ENCODE measurements at regions of chr6 and their contacts with region 1.

Region 1: GRCh38 chr6:134537146-134537555 is 219.2 kb upstream of the SGK1 start:
- DNase-seq: peak; percentile 70
- H3K4me3 ChIP-seq: no peak overlapping the region
- H3K27ac ChIP-seq: peak overlapping the region; percentile 79
- H3K27me3 ChIP-seq: no peaks in the 10 kb centered on the region
- CTCF ChIP-seq: no peak

Region 2: DNA sequence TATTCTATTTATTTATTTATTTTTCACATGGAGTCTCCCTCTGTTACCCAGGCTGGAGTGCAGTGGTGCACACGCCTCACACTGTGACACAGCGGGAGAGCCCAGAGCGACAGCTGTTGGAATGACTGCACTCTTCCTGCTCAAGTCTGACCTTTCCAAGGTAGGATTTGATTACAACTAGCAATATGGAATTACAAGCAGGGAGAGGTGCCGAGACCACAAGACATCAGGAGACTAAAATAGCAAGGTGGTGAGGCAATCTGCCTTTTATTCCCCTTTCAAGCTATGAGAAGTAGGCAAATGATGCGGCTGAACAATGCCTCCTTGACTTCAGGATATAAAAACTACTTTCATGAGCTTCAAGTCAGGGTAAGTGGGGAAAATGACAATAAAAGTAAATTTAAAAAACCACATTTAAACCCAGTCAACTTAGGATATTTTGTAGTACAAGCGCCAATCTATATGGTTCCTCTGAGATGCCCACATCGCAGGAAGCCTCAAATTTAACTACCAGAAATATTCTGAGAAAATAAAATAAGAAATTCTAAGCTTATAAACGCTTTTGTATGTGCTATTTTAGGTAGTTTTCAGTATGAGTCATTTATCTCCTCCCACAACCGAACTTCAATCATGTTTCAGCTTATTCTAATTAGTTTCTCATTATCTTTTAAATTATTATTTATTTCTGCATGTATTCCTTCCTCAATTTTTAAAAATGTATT is 72.3 kb before region 1 on chr6:
- CTCF ChIA-PET with region 1: no interaction called
- POLR2A ChIA-PET with region 1: no interaction called
- DNase-seq: peak; percentile 60
- H3K4me3 ChIP-seq: no peak overlapping the region
- H3K27ac ChIP-seq: peak overlapping the region; percentile 32
- H3K27me3 ChIP-seq: no peaks in the 10 kb centered on the region
- CTCF ChIP-seq: no peak

Region 3: GRCh38 chr6:134512981-134513391 is 24.2 kb before region 1 on chr6:
- CTCF ChIA-PET with region 1: no interaction called
- POLR2A ChIA-PET with region 1: no interaction called
- DNase-seq: no peak
- H3K4me3 ChIP-seq: no peak overlapping the region
- H3K27ac ChIP-seq: no peak overlapping the region
- H3K27me3 ChIP-seq: no peaks in the 10 kb centered on the region
- CTCF ChIP-seq: no peak

Region 4: DNA sequence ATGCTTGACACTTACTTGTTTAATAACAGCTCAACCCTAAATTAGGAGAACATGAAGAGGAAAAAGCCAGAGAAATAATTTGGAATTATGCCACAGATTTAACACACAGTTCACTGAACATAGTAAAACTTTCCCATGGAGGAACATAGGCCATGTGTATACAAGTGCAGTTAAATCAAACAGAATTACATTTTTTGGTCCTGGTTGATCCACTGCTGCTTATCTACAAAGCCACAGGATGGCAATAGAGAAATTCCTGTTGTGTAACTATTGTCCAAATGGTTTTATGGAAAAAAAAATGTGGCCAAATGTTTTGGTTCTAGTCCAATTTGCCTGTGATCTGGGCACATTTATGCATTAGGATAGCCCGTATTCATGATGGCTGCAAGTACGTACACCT is 276.0 kb after region 1 on chr6:
- CTCF ChIA-PET with region 1: interaction called, 10 read pairs
- POLR2A ChIA-PET with region 1: no interaction called
- DNase-seq: no peak
- H3K4me3 ChIP-seq: no peak overlapping the region
- H3K27ac ChIP-seq: no peak overlapping the region
- H3K27me3 ChIP-seq: no peaks in the 10 kb centered on the region
- CTCF ChIP-seq: no peak

Region 5: DNA sequence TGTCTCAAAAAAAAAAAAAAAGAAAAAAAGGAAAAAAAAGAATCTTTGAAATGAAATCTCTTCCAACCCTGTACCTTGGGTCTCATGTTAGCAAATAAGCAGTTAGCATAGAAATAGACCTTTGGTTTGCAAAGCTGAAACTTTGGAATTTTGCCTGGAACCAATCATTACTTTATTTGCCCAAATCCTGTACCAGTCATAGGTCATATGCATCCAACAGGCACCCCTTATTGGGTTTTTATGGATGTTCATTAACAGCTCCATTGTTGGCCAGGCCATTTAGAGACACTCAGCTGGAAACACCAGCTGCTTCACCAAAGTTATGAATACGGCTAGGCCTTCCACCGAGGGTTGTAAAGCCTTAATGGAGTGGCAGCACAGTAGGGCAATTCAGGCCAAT is 359.7 kb after region 1 on chr6:
- CTCF ChIA-PET with region 1: no interaction called
- POLR2A ChIA-PET with region 1: no interaction called
- DNase-seq: no peak
- H3K4me3 ChIP-seq: no peak overlapping the region
- H3K27ac ChIP-seq: no peak overlapping the region
- H3K27me3 ChIP-seq: no peaks in the 10 kb centered on the region
- CTCF ChIP-seq: no peak

Region 6: DNA sequence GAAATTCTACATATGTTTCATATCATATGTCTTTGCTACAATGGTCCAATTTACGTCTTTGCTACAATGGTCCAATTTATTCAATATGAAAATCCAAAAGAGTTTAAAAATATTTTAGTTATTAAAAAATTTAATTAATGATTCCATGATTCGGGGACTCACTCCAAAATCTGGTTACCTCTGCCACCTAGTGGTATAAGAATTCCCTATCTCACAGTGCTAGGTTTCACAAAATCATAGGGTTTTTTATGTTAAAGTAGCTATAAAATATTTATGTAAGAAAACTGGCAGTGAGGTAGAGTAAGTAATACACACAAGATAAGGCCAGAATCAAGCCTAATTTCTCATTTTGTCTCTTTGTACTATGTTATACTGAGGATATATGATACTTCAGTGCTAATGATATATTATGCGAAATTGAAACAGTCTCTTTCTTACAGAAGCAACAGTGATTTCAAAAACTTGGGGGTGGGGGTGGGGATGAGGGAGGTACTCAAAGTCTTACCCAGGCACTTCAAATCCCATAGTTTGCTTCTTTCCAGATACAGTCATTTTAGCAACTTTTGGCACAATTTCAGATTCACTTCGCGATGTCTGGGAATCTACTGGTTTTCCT is 465.2 kb after region 1 on chr6:
- CTCF ChIA-PET with region 1: no interaction called
- POLR2A ChIA-PET with region 1: no interaction called
- DNase-seq: no peak
- H3K4me3 ChIP-seq: no peak overlapping the region
- H3K27ac ChIP-seq: no peak overlapping the region
- H3K27me3 ChIP-seq: no peaks in the 10 kb centered on the region
- CTCF ChIP-seq: peak; percentile 76

Measured in AG04450 (cell line).